T-cell (primary cell): ENCODE measurements at regions of chr4 and their contacts with region 1.

Region 1: DNA sequence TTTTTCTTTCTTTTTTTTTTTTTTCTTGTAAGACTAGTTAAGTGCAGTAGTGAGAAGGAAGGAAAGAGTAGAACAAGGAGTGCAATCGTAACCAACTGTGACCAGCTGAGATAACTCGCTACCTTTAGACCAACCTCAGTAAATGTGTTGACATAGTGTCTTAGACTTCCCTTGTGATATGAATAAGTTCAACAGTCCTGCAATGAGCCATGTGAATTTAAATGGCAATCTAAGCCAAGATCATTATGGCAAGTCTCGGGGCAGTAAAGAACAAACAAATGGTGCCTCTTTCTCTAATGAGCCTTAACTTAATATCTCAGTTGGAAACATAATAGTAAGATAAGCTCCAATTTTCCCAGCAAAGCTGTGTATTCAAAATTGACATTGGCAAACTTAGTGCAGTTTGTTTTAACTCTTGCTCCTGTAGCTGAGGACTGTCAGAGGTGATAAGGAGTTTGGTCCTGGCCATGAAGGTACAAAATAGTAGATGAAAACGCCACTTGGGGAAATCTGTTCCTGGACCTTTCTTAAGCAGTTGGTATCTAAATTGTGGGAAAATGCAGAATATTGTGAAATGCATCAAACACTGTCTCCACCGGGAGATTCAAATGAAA is 13.8 kb upstream of the RELL1 start:
- DNase-seq: no peak
- ATAC-seq: no peak
- H3K4me3 ChIP-seq: no peak overlapping the region
- H3K4me3 Mint-ChIP-seq: no peak overlapping the region
- H3K27ac ChIP-seq: no peak overlapping the region
- H3K27ac Mint-ChIP-seq: no peak overlapping the region
- H3K4me1 ChIP-seq: no peaks in the 10 kb centered on the region
- H3K4me1 Mint-ChIP-seq: no peaks in the 10 kb centered on the region
- H3K27me3 ChIP-seq: no peaks in the 10 kb centered on the region
- H3K27me3 Mint-ChIP-seq: no peaks in the 10 kb centered on the region

Region 2: GRCh38 chr4:37431417-37431743 is 268.6 kb before region 1 on chr4:
- CTCF ChIA-PET with region 1: no interaction called
- POLR2A ChIA-PET with region 1: interaction called in 1 of 2 experiments, 16 read pairs
- DNase-seq: no peak
- ATAC-seq: no peak
- H3K4me3 ChIP-seq: no peak overlapping the region
- H3K4me3 Mint-ChIP-seq: no peak overlapping the region
- H3K27ac ChIP-seq: no peak overlapping the region
- H3K27ac Mint-ChIP-seq: no peak overlapping the region
- H3K4me1 ChIP-seq: no peaks in the 10 kb centered on the region
- H3K4me1 Mint-ChIP-seq: no peaks in the 10 kb centered on the region
- H3K27me3 ChIP-seq: peaks cover 0 to 3% of the 10 kb centered on the region in 2 experiments
- H3K27me3 Mint-ChIP-seq: peaks cover 9 to 45% of the 10 kb centered on the region in 2 donors

Region 3: GRCh38 chr4:37685161-37685822 is 14.7 kb before region 1 on chr4:
- CTCF ChIA-PET with region 1: no interaction called
- POLR2A ChIA-PET with region 1: no interaction called
- DNase-seq: peak in 33 of 35 experiments; percentile 25 to 83 (median 48)
- ATAC-seq: peak in 2 of 4 experiments; percentile 5 to 31
- H3K4me3 ChIP-seq: peak overlapping the region; percentile 67 to 81
- H3K4me3 Mint-ChIP-seq: peak overlapping the region; percentile 91 to 95 (median 95)
- H3K27ac ChIP-seq: peak overlapping the region; percentile 82
- H3K27ac Mint-ChIP-seq: peak overlapping the region; percentile 95 to 96
- H3K4me1 ChIP-seq: peaks cover 16 to 35% of the 10 kb centered on the region in 2 experiments
- H3K4me1 Mint-ChIP-seq: peaks cover 35 to 42% (median 40%) of the 10 kb centered on the region in 3 donors
- H3K27me3 ChIP-seq: no peaks in the 10 kb centered on the region
- H3K27me3 Mint-ChIP-seq: no peaks in the 10 kb centered on the region

Region 4: GRCh38 chr4:37732526-37733186 is 32.7 kb after region 1 on chr4:
- CTCF ChIA-PET with region 1: interaction called in 1 of 2 experiments, 12 read pairs
- POLR2A ChIA-PET with region 1: no interaction called
- DNase-seq: no peak
- ATAC-seq: no peak
- H3K4me3 ChIP-seq: no peak overlapping the region
- H3K4me3 Mint-ChIP-seq: no peak overlapping the region
- H3K27ac ChIP-seq: no peak overlapping the region
- H3K27ac Mint-ChIP-seq: no peak overlapping the region
- H3K4me1 ChIP-seq: no peaks in the 10 kb centered on the region
- H3K4me1 Mint-ChIP-seq: peaks cover 0 to 2% (median 2%) of the 10 kb centered on the region in 3 donors
- H3K27me3 ChIP-seq: no peaks in the 10 kb centered on the region
- H3K27me3 Mint-ChIP-seq: no peaks in the 10 kb centered on the region

Region 5: GRCh38 chr4:37780444-37781150 is 80.6 kb after region 1 on chr4:
- CTCF ChIA-PET with region 1: no interaction called
- POLR2A ChIA-PET with region 1: interaction called in 1 of 2 experiments, 10 read pairs
- DNase-seq: peak; percentile 40 to 86 (median 68)
- ATAC-seq: peak; percentile 97 to 100 (median 99)
- H3K4me3 ChIP-seq: no peak overlapping the region
- H3K4me3 Mint-ChIP-seq: peak overlapping the region in 1 of 3 donors; percentile 73
- H3K27ac ChIP-seq: peak overlapping the region; percentile 48
- H3K27ac Mint-ChIP-seq: peak overlapping the region; percentile 94 to 97
- H3K4me1 ChIP-seq: peaks cover 18 to 22% of the 10 kb centered on the region in 2 experiments
- H3K4me1 Mint-ChIP-seq: peaks cover 24 to 28% (median 26%) of the 10 kb centered on the region in 3 donors
- H3K27me3 ChIP-seq: no peaks in the 10 kb centered on the region
- H3K27me3 Mint-ChIP-seq: no peaks in the 10 kb centered on the region